Heart left ventricle (tissue), 16 donors: ENCODE measurements at regions of chr3 and their contacts with region 1.

Region 1: GRCh38 chr3:43503067-43503728 is 118.6 kb downstream of the ANO10 start:
- DNase-seq: no peak
- ATAC-seq: peak in 3 of 4 donors; percentile 27 to 49 (median 41)
- H3K4me3 ChIP-seq: no peak overlapping the region
- H3K27ac ChIP-seq: no peak overlapping the region
- H3K4me1 ChIP-seq: peaks cover 0 to 30% (median 10%) of the 10 kb centered on the region in 12 donors
- H3K27me3 ChIP-seq: no peaks in the 10 kb centered on the region
- CTCF ChIP-seq: peak; percentile 43 to 72 (median 61)
- POLR2A ChIP-seq: no peak

Region 2: GRCh38 chr3:42961633-42962032 is 541.6 kb before region 1 on chr3:
- intact Hi-C with region 1: loop called in 6 of 10 experiments (anchors 2 to 10 kb)
- DNase-seq: peak in 2 of 5 donors; percentile 16 to 29
- ATAC-seq: peak in 3 of 4 donors; percentile 49 to 68 (median 59)
- H3K4me3 ChIP-seq: no peak overlapping the region
- H3K27ac ChIP-seq: no peak overlapping the region
- H3K4me1 ChIP-seq: peaks cover 0 to 6% (median 0%) of the 10 kb centered on the region in 12 donors
- H3K27me3 ChIP-seq: no peaks in the 10 kb centered on the region
- CTCF ChIP-seq: peak; percentile 50 to 79 (median 65)
- POLR2A ChIP-seq: no peak

Region 3: GRCh38 chr3:43162230-43163084 is 340.7 kb before region 1 on chr3:
- intact Hi-C with region 1: loop called (anchors 1 to 5 kb)
- DNase-seq: no peak
- ATAC-seq: peak in 3 of 4 donors; percentile 51 to 81 (median 65)
- H3K4me3 ChIP-seq: peak overlapping the region in 7 of 12 donors; percentile 3 to 19 (median 11)
- H3K27ac ChIP-seq: peak overlapping the region in 7 of 12 donors; percentile 38 to 73 (median 59)
- H3K4me1 ChIP-seq: peaks cover 0 to 16% (median 10%) of the 10 kb centered on the region in 12 donors
- H3K27me3 ChIP-seq: no peaks in the 10 kb centered on the region
- CTCF ChIP-seq: peak; percentile 30 to 68 (median 57)
- POLR2A ChIP-seq: no peak

Region 4: DNA sequence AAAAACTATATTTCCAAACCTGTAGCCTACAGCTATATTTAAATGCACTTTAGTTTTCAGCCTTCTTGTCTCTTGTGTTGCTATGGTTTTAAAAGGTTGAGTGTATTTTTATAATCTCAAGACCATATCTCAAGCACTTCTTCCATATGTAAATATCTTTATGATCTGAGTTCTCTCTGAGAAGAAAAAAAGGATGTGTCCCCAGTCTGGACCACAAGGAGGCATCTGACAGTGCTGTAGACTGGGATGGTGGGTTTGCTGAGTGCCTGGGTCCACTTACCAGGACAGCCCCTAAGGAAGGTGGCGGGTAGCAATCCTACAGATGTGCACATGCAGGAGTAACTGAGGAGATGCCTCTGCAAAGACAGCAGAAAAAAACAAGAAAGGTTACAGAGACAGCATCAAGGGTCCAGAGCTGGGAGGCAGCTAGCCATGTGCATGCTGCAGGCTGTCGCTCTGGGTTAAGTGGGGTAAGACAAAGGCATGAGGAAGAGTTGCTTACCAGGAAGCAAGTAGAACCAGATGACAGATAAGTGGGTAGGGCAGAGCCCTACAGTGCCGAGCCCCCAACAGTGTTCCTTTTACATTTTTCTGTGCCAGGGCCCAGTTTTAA is 287.4 kb before region 1 on chr3:
- intact Hi-C with region 1: loop called in 7 of 10 experiments (anchors 5 to 10 kb)
- DNase-seq: no peak
- ATAC-seq: no peak
- H3K4me3 ChIP-seq: no peak overlapping the region
- H3K27ac ChIP-seq: peak overlapping the region in 1 of 12 donors; percentile 35
- H3K4me1 ChIP-seq: peaks cover 0 to 22% (median 6%) of the 10 kb centered on the region in 12 donors
- H3K27me3 ChIP-seq: no peaks in the 10 kb centered on the region
- CTCF ChIP-seq: no peak
- POLR2A ChIP-seq: no peak

Region 5: DNA sequence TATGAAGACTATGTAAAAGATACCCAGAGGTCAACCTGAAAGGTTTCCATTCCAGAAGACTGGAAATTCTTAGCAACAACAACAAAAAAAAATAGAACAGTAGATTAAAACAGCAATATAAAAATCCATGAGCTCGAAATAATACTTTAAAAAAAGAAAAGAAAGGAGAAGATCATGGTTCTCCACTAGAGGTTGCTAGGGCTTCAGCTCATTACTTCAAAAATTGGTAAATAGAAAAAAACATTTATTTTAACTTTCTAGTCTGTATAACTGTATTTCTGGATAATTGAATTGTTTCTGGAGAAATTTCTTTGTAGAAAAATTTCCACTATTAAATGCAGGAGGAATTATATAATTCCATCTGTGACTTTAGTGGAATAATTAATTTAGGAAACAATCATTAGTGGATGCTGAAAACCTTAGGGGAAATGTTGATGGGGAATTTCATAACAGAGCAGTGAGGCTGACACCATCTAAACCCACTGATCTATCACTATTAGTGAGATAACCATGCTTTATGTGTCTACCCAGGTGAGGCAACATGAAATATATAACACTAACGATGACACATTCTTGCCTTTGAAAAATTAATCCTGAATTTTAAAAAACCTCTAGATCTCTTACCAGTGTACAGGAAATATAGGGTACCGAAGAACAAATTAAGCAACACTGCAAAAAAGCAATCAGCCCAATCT is 279.4 kb before region 1 on chr3:
- intact Hi-C with region 1: loop called in 8 of 10 experiments (anchors 2 to 10 kb)
- DNase-seq: no peak
- ATAC-seq: no peak
- H3K4me3 ChIP-seq: no peak overlapping the region
- H3K27ac ChIP-seq: no peak overlapping the region
- H3K4me1 ChIP-seq: peaks cover 0 to 2% (median 0%) of the 10 kb centered on the region in 12 donors
- H3K27me3 ChIP-seq: no peaks in the 10 kb centered on the region
- CTCF ChIP-seq: peak; percentile 25 to 63 (median 46)
- POLR2A ChIP-seq: no peak

Region 6: DNA sequence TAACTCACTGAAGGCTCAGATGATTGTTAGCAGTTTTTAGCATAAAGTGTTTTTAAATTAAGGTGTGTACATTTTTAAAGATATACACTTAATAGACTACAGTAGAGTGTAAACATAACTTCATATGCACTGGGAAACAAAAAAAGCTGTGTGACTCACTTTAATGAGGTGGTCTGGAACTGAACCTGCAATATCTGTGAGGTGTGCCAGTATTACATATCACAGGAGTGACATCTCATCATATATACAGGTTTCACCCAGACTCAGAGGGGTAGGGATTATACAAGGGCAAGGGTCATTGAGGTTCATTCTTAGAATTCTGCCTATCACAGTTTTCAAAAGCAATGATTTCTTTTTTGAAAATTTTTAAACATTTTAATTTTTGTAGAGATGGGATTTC is 224.1 kb before region 1 on chr3:
- intact Hi-C with region 1: no loop called
- DNase-seq: no peak
- ATAC-seq: no peak
- H3K4me3 ChIP-seq: no peak overlapping the region
- H3K27ac ChIP-seq: no peak overlapping the region
- H3K4me1 ChIP-seq: peaks cover 0 to 8% (median 0%) of the 10 kb centered on the region in 12 donors
- H3K27me3 ChIP-seq: no peaks in the 10 kb centered on the region
- CTCF ChIP-seq: no peak
- POLR2A ChIP-seq: no peak

Region 7: DNA sequence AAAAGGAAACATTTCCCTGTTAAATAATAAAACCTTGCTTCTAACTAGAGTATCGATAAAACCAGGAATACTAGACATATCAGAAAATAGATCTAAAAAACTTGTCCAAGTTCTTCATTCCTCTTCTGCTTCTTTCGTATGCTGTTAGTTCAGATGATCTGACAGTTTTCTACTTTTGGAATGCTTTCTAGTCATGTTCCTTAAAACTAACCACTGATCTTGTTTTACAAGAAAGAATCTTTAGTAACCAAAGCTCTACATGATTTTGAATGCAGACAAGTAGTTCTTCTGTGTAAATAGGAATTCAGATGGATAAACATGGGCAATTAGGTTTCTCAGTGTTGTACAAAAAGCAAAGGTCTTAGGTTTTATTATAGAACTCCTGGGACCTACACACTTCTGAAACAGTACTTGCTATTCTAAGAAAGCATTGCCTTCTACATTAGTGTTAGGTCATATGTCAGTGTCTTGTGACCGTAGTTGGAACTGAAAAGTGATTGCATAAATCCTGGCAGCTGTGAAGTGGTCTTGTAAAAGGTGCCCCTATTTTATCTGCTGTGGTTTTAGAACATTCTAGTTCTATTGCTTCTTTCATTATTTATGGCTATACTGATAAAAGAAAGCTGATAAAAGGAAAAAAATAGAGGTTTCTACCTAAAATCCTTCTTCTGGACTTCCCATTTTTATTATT is 176.2 kb before region 1 on chr3:
- intact Hi-C with region 1: loop called in 1 of 10 experiments (anchors 10 kb)
- DNase-seq: no peak
- ATAC-seq: peak; percentile 63 to 84 (median 78)
- H3K4me3 ChIP-seq: no peak overlapping the region
- H3K27ac ChIP-seq: peak overlapping the region in 11 of 12 donors; percentile 51 to 85 (median 74)
- H3K4me1 ChIP-seq: peaks cover 0 to 84% (median 56%) of the 10 kb centered on the region in 12 donors
- H3K27me3 ChIP-seq: no peaks in the 10 kb centered on the region
- CTCF ChIP-seq: no peak
- POLR2A ChIP-seq: no peak

Region 8: DNA sequence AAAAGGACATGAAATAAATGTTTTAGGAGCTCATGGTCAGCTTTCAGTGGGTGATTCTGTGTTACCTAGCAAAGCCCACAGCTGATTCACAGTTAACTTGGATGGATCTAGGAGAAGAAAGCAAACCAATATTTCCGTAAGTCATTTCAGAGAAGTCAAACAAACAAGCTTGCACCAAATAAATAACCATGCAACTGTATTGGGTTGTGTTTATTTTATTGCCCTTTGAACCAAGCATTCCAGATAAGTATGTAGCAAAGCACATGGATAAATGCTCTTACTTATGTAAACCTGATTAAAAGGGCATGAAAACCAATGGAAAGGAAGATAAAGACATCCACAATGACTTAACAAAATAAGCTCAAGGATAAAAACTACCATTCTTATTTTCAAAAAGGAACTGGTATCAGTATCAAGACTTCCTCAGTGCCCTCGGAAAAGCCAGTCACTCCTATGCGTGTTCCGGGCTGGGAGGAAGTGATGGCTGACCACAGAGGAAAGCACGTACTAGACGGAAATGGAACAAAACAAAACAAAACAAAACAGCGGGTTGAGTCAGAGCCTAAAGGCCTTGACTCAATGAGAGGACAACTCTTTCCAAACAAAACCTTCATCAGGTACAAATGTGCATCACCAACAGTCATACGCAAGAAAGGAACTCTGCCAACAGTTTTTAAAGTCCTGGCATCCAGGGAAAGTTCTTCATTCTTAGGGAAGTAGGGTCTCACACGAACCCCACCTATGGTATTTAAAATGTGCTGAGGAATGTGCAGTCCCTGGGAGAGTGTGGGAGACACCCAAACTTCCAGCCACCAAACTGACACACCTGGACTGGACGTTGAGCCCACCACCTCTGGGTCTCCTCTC is 113.6 kb before region 1 on chr3:
- intact Hi-C with region 1: loop called in 5 of 10 experiments (anchors 5 to 10 kb)
- DNase-seq: peak in 4 of 5 donors; percentile 58 to 67 (median 59)
- ATAC-seq: peak; percentile 42 to 82 (median 76)
- H3K4me3 ChIP-seq: no peak overlapping the region
- H3K27ac ChIP-seq: peak overlapping the region; percentile 50 to 92 (median 72)
- H3K4me1 ChIP-seq: peaks cover 0 to 51% (median 30%) of the 10 kb centered on the region in 12 donors
- H3K27me3 ChIP-seq: no peaks in the 10 kb centered on the region
- CTCF ChIP-seq: no peak
- POLR2A ChIP-seq: no peak

Region 9: GRCh38 chr3:43690400-43691119 is 187.4 kb after region 1 on chr3 and contains the start of gene ABHD5:
- intact Hi-C with region 1: no loop called
- DNase-seq: peak; percentile 89 to 96 (median 93)
- ATAC-seq: peak; percentile 95 to 98 (median 97)
- H3K4me3 ChIP-seq: peak within 1 kb of the TSS; percentile 73 to 98 (median 86)
- H3K27ac ChIP-seq: peak within 1 kb of the TSS; percentile 83 to 97 (median 94)
- H3K4me1 ChIP-seq: peaks cover 2 to 38% (median 14%) of the 10 kb centered on the region in 12 donors
- H3K27me3 ChIP-seq: no peaks in the 10 kb centered on the region
- CTCF ChIP-seq: peak in 5 of 12 donors; percentile 2 to 47 (median 30)
- POLR2A ChIP-seq: peak; percentile 81 to 99
- total RNA-seq, gene ABHD5: 24.2 to 48.2 (median 26.7) TPM

Region 10: GRCh38 chr3:43932921-43933320 is 429.7 kb after region 1 on chr3:
- intact Hi-C with region 1: no loop called
- DNase-seq: no peak
- ATAC-seq: no peak
- H3K4me3 ChIP-seq: no peak overlapping the region
- H3K27ac ChIP-seq: no peak overlapping the region
- H3K4me1 ChIP-seq: no peaks in the 10 kb centered on the region
- H3K27me3 ChIP-seq: peaks cover 0 to 2% (median 0%) of the 10 kb centered on the region in 9 donors
- CTCF ChIP-seq: no peak
- POLR2A ChIP-seq: no peak